Activated CD4-positive, alpha-beta T cell treated with anti-CD3 and anti-CD28 coated beads, Interleukin-2, amount 10 ng/mL, durations not matched to agents 24 days and 14 days (primary cell): ENCODE measurements at regions of chr7 and their contacts with region 1.

Region 1: DNA sequence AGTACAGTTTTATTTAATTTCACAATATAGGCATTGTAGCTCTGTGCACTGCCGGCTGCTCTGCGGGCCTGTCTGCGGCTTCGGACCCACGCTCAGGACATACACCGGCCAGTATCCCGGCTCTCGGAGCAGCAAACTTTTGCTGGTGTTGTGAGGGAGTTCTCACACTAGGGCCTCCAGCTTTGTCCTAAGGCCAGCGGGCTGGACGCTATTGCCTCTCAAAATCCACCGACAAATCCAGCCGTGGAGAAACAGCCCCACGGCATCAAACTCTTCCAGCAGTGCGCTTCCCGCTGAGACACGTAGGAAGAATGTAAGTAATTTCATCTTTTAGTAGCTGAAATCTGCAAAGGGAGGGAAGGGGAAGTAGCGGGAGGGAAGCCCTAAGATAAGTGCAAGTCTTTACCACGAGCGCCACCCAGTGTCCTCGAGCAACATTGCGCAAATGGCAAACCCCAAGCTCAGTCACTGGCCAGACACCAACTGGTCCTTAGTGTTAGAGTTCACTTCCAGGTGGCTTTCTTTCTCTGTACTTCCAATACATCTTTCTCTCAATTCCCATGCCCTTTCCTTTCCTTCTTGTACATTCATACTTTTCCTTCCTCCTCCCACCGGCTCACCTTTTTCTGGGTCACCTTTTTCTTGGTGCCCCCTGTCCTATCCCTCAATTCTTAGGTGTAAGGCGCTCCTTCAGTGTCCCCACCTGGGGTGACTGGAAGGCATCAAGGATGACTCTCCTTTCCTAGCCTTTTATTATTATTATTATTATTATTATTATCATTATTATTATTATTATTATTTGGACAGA is 3.0 kb upstream of the DLX5 start:
- DNase-seq: peak; percentile 88
- H3K4me3 Mint-ChIP-seq: peak overlapping the region; percentile 41
- H3K27ac Mint-ChIP-seq: no peak overlapping the region
- H3K4me1 Mint-ChIP-seq: peaks cover 17% of the 10 kb centered on the region
- H3K27me3 Mint-ChIP-seq: peaks cover 63% of the 10 kb centered on the region

Region 2: GRCh38 chr7:96075510-96076349 is 951.9 kb before region 1 on chr7:
- intact Hi-C with region 1: loop called (anchors 1 kb)
- DNase-seq: peak; percentile 81
- H3K4me3 Mint-ChIP-seq: peak overlapping the region; percentile 78
- H3K27ac Mint-ChIP-seq: no peak overlapping the region
- H3K4me1 Mint-ChIP-seq: peaks cover 5% of the 10 kb centered on the region
- H3K27me3 Mint-ChIP-seq: peaks cover 45% of the 10 kb centered on the region

Region 3: GRCh38 chr7:96993094-96993865 is 34.4 kb before region 1 on chr7:
- intact Hi-C with region 1: loop called (anchors 5 kb)
- DNase-seq: no peak
- H3K4me3 Mint-ChIP-seq: no peak overlapping the region
- H3K27ac Mint-ChIP-seq: no peak overlapping the region
- H3K4me1 Mint-ChIP-seq: peaks cover 2% of the 10 kb centered on the region
- H3K27me3 Mint-ChIP-seq: peaks cover 87% of the 10 kb centered on the region

Region 4: GRCh38 chr7:97117372-97118188 is 89.9 kb after region 1 on chr7 and contains the start of gene SDHAF3:
- intact Hi-C with region 1: no loop called
- DNase-seq: peak; percentile 99
- H3K4me3 Mint-ChIP-seq: peak within 1 kb of the TSS; percentile 93
- H3K27ac Mint-ChIP-seq: peak within 1 kb of the TSS; percentile 95
- H3K4me1 Mint-ChIP-seq: peaks cover 26% of the 10 kb centered on the region
- H3K27me3 Mint-ChIP-seq: no peaks in the 10 kb centered on the region
- total RNA-seq, gene SDHAF3: 24.9 and 27.8 TPM in 2 replicates

Region 5: DNA sequence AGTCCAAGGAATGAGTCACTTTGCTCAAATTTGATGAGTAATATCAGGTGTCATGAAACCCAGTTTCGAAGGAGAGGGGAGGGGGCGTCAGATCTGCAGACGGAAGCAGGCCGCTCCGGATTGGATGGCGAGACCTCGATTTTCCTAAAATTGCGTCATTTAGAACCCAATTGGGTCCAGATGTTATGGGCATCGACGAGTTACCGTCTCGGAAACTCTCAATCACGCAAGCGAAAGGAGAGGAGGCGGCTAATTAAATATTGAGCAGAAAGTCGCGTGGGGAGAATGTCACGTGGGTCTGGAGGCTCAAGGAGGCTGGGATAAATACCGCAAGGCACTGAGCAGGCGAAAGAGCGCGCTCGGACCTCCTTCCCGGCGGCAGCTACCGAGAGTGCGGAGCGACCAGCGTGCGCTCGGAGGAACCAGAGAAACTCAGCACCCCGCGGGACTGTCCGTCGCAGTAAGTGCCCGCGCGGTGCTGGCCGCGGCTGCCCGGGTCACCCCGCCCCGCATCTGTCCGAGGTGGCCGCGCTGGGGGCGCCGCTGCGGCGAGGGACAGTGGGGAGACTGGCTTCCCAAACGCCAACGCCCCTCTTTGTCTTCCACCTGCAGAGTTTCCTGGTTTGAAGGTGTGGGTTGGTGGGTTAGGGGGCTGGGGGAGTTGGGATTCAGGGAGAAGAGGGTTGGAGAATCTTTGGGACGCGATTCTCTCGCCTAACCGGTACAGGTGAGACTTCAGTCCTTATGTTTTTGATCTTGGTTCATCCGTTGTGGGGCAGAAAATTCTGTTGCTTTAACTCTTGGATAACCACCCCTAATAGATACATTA is 704.3 kb after region 1 on chr7 and contains the start of gene TAC1:
- intact Hi-C with region 1: loop called (anchors 5 kb)
- DNase-seq: no peak
- H3K4me3 Mint-ChIP-seq: no peak within 1 kb of the TSS
- H3K27ac Mint-ChIP-seq: peak within 1 kb of the TSS; percentile 13
- H3K4me1 Mint-ChIP-seq: peaks cover 6% of the 10 kb centered on the region
- H3K27me3 Mint-ChIP-seq: peaks cover 55% of the 10 kb centered on the region
- total RNA-seq, gene TAC1: 0.28 TPM in 1 of 2 replicates, not detected in the other